ENCODE measurements at regions of chr13 and their contacts with region 1.

Region 1: DNA sequence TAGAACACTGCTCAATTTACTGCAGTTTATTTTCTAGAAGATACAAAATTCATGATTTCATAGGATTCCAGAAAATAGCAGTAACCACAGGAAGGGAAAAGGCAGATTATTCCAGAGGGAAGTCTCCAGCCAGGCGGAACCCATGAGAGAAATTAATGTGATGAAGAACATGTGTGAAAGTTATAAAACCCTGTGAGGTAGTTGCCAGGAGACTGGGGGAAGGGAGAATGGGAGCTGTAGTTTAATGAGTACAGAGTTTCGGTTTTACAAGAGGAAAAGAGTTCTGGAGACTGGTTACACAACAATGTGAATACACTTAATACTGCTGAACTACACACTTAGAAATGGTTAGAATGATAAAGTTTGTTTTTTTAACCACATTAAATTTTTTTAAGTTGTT is 14.2 kb upstream of the PDX1 start:
- DNase-seq: no peak
- H3K4me3 ChIP-seq: no peak overlapping the region
- H3K27ac ChIP-seq: no peak overlapping the region
- H3K4me1 ChIP-seq: no peaks in the 10 kb centered on the region
- H3K27me3 ChIP-seq: peaks cover 0 to 59% of the 10 kb centered on the region in 2 donors
- CTCF ChIP-seq: no peak
- POLR2A ChIP-seq: no peak

Region 2: GRCh38 chr13:27878274-27878673 is 27.4 kb before region 1 on chr13:
- intact Hi-C with region 1: loop called (anchors 2 kb)
- DNase-seq: no peak
- H3K4me3 ChIP-seq: no peak overlapping the region
- H3K27ac ChIP-seq: no peak overlapping the region
- H3K4me1 ChIP-seq: no peaks in the 10 kb centered on the region
- H3K27me3 ChIP-seq: peaks cover 0 to 53% of the 10 kb centered on the region in 2 donors
- CTCF ChIP-seq: no peak
- POLR2A ChIP-seq: no peak

Region 3: DNA sequence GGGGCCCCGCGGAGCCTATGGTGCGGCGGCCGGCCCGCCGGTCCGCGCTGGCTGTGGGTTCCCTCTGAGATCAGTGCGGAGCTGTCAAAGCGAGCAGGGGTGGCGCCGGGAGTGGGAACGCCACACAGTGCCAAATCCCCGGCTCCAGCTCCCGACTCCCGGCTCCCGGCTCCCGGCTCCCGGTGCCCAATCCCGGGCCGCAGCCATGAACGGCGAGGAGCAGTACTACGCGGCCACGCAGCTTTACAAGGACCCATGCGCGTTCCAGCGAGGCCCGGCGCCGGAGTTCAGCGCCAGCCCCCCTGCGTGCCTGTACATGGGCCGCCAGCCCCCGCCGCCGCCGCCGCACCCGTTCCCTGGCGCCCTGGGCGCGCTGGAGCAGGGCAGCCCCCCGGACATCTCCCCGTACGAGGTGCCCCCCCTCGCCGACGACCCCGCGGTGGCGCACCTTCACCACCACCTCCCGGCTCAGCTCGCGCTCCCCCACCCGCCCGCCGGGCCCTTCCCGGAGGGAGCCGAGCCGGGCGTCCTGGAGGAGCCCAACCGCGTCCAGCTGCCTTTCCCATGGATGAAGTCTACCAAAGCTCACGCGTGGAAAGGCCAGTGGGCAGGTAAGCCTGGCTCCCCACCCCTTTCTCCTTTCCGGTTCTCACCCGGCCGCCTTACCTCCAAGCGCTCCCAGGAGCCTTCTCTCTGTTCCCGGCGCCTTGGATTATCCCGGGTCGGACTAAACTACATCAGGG is 14.5 kb after region 1 on chr13 and contains the start of gene PDX1:
- intact Hi-C with region 1: no loop called
- DNase-seq: no peak
- H3K4me3 ChIP-seq: peak within 1 kb of the TSS; percentile 39 to 61 (median 42)
- H3K27ac ChIP-seq: no peak within 1 kb of the TSS
- H3K4me1 ChIP-seq: no peaks in the 10 kb centered on the region
- H3K27me3 ChIP-seq: peaks cover 6 to 100% of the 10 kb centered on the region in 2 donors
- CTCF ChIP-seq: no peak
- POLR2A ChIP-seq: no peak
- total RNA-seq, gene PDX1: not detected

Measured in breast epithelium (tissue), 4 donors.